H1 (cell line): ENCODE measurements at regions of chr5 and their contacts with region 1.

Region 1: GRCh38 chr5:72179028-72179815 is 71.9 kb downstream of the MAP1B start:
- DNase-seq: no peak
- H3K4me3 ChIP-seq: no peak overlapping the region
- H3K27ac ChIP-seq: no peak overlapping the region
- H3K4me1 ChIP-seq: peaks cover 2 to 16% (median 8%) of the 10 kb centered on the region in 4 experiments
- H3K27me3 ChIP-seq: no peaks in the 10 kb centered on the region
- CTCF ChIP-seq: no peak
- EP300 ChIP-seq: no peak
- POLR2A ChIP-seq: no peak
- RAD21 ChIP-seq: no peak

Region 2: DNA sequence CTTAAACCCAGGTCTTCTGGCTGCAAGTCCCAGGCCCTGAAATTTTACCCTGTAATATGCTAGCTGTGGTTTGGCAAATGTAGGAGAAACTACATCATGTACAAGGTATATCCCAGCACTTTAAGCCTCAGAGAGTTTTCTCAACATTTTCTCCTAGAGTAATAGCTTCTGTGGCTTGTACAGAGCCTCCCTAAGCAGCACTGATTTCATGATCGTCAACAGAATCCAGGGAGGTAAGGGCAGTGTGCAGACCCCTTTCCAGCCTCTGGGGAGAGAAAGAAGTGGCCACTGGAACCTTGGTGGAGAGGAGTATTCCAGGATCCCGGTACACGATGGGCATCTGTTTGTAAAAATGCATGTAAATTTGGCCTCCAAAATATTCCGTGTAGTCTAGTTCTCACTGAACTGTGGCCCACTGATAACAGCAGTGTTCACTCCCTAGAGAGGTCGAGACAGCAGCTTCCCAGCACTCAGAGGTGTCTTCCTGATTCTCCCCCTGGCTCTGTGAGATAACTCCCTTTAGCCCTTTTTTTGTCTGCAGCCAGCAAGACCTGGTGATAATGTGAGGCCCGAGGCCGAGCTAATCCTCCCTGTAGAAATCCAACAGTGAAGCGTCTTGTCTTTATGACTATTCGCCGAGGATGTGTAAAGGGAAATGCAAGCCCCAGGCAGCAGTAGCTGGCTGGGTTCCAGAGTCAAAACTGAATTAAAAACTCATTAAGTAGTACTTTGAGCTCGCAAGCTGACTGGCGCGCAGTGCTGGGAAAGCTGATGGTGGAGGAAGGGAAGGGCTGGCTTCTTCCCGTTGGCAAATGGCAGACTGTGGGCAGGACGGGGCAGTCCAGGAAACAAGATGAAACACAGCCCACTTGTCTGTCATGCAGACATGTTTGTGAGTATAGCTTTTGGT is 12.9 kb before region 1 on chr5:
- CTCF ChIA-PET with region 1: interaction called, 3 read pairs
- POLR2A ChIA-PET with region 1: interaction called, 12 read pairs
- DNase-seq: peak in 1 of 2 experiments; percentile 54
- H3K4me3 ChIP-seq: peak overlapping the region in 1 of 4 experiments; percentile 29; a peak in 3 of 8 replicates
- H3K27ac ChIP-seq: peak overlapping the region; percentile 37; the same call in 1 of the 2 replicates
- H3K4me1 ChIP-seq: peaks cover 2 to 25% (median 18%) of the 10 kb centered on the region in 4 experiments; a peak in 6 of 7 replicates
- H3K27me3 ChIP-seq: no peaks in the 10 kb centered on the region
- CTCF ChIP-seq: no peak
- EP300 ChIP-seq: no peak
- POLR2A ChIP-seq: no peak
- RAD21 ChIP-seq: no peak